GM23248 (cell line): ENCODE measurements at regions of chr11 and their contacts with region 1.

Region 1: GRCh38 chr11:118198370-118198769 is 21.9 kb upstream of the SCN2B start:
- DNase-seq: peak; percentile 78
- H3K4me3 ChIP-seq: 0 out of 2 replicates have a peak overlapping the region, but pooled peaks have one; percentile 37
- H3K27ac ChIP-seq: no peak overlapping the region
- H3K4me1 ChIP-seq: peaks cover 4% of the 10 kb centered on the region
- H3K27me3 ChIP-seq: peaks cover 17% of the 10 kb centered on the region

Region 2: GRCh38 chr11:118088477-118088920 is 109.9 kb before region 1 on chr11:
- in situ Hi-C with region 1: no loop called
- DNase-seq: no peak
- H3K4me3 ChIP-seq: no peak overlapping the region
- H3K27ac ChIP-seq: no peak overlapping the region
- H3K4me1 ChIP-seq: no peaks in the 10 kb centered on the region
- H3K27me3 ChIP-seq: no peaks in the 10 kb centered on the region

Region 3: DNA sequence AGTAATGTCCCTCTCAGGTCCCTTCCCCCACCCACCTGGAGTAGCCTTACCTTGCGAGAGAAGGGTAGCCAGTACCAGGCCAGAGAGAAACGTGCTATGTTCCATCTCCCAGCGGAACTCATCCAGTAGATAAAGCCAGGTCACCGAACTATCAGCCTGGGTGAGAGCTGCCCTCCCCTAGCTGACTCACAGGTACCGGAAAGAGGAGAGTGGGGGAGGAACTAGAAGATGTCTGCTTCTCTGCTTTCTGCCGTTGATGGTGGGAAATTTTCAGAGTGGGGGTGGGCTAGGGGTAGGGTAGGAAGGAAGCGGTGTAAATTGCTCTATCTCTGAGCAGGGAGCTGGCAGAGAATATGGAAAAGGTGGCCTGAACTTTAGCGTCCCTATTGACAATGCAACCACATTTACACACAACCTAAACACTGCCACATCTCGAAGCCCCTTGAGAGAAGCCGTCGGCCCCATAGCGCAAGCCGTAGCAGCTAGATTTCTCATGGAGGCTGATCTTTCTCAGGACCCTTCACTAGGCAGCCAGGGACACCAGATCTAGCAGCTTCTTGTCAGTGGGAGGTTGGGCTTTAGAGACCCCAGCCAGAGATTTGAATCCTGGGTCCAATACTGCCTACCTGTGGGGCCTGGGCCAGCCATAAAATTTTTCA is 144.3 kb after region 1 on chr11 and contains the start of gene CD3D:
- in situ Hi-C with region 1: loop called (anchors 10 kb)
- DNase-seq: no peak
- H3K4me3 ChIP-seq: no peak within 1 kb of the TSS
- H3K27ac ChIP-seq: no peak within 1 kb of the TSS
- H3K4me1 ChIP-seq: no peaks in the 10 kb centered on the region
- H3K27me3 ChIP-seq: peaks cover 8% of the 10 kb centered on the region
- total RNA-seq, gene CD3D: not detected in 2 replicates